Calu3 (cell line): ENCODE measurements at regions of chr2 and their contacts with region 1.

Region 1: DNA sequence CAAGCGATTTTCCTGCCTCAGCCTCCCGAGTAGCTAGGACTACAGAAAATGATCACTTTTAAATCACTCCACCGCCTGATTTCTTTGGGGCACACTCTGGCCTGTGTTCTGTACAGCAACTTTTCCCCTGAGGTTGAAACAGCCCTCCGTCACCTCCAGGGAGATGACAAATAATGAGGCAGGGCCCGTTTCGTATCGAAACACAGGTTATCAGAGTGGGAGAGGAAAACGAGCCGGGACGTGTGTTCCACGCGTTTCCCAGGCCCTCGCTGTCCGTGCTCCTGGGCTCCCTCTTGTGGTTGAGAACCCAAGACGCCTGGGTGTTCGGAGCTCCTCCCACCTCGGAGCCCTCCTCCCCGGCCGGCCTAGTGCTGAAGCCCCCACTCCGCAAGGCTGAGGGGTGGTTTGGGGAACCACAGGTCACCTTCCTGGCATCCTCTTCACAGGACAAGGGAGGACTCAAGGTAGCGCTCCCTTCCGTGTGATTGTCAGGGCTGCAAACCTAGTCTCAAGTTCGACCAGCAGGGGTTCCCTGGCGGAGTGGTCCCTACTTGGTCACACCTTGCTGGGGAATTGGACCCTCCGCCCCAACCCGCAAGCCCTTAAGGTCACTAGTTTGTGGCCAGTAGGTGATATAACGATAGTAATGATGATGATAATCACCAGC is 12.8 kb downstream of the ATP6V1B1 start:
- DNase-seq: peak; percentile 86
- H3K4me3 Mint-ChIP-seq: peak overlapping the region; percentile 54
- H3K27ac Mint-ChIP-seq: no peak overlapping the region
- H3K4me1 Mint-ChIP-seq: peaks cover 17% of the 10 kb centered on the region
- H3K27me3 Mint-ChIP-seq: peaks cover 40% of the 10 kb centered on the region
- CTCF ChIP-seq: peak; percentile 84

Region 2: DNA sequence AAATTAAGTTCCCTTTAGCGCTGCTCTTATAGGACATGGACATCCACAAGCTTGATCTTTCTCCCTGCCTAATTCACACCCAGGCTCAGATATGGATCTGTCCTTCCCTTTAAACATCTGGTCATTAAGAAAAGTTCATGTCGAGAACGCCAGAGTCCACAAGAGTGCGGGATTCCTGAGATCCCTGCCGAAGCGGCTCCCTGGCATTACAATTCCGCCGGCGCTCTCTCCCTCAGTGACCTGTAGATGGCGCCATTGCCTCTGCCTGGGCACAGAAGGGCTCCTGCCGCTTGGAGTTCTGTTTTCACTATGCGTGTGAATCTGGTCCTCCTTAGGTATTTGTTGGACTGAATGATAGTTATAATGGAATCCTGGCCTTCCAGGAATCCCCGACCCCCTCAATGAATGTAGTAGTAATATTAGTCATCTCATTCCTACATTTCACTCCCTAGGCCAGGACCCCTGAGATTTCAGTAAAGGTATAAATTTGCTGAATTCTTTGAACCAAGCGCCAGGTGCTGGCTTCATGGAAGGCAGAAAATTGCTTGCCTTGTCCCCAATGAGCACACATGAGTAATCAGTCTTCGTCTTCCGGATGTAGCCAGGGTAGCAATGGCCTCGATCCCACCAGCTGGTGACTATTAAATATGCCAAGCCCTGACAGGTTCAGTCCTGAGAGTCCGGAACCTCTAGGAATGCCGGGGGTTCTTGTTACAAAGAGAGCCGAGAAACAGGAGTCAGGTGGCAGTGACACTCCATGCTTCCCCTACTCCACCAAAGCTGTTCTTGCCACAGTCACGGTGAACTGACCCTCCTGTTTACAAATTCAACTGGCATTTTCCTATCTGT is 86.5 kb before region 1 on chr2:
- CTCF ChIA-PET with region 1: interaction called, 7 read pairs
- intact Hi-C with region 1: loop called (anchors 2 kb)
- DNase-seq: peak; percentile 85
- H3K4me3 Mint-ChIP-seq: no peak overlapping the region
- H3K27ac Mint-ChIP-seq: no peak overlapping the region
- H3K4me1 Mint-ChIP-seq: peaks cover 8% of the 10 kb centered on the region
- H3K27me3 Mint-ChIP-seq: peaks cover 85% of the 10 kb centered on the region
- CTCF ChIP-seq: peak; percentile 89

Region 3: GRCh38 chr2:70871398-70872211 is 76.9 kb before region 1 on chr2:
- CTCF ChIA-PET with region 1: interaction called, 12 read pairs
- intact Hi-C with region 1: loop called (anchors 1 kb)
- DNase-seq: peak; percentile 92
- H3K4me3 Mint-ChIP-seq: peak overlapping the region; percentile 36
- H3K27ac Mint-ChIP-seq: no peak overlapping the region
- H3K4me1 Mint-ChIP-seq: peaks cover 9% of the 10 kb centered on the region
- H3K27me3 Mint-ChIP-seq: peaks cover 57% of the 10 kb centered on the region
- CTCF ChIP-seq: peak; percentile 97